ENCODE measurements at regions of chr2 and their contacts with region 1.

Region 1: GRCh38 chr2:38626326-38627035 is 23.8 kb upstream of the HNRNPLL start:
- DNase-seq: peak; percentile 78
- ATAC-seq: peak; percentile 82
- H3K4me3 Mint-ChIP-seq: no peak overlapping the region
- H3K27ac Mint-ChIP-seq: peak overlapping the region; percentile 30
- H3K4me1 Mint-ChIP-seq: peaks cover 27% of the 10 kb centered on the region
- H3K27me3 Mint-ChIP-seq: no peaks in the 10 kb centered on the region

Region 2: GRCh38 chr2:38417745-38418689 is 208.5 kb before region 1 on chr2:
- CTCF ChIA-PET with region 1: no interaction called
- DNase-seq: no peak
- ATAC-seq: no peak
- H3K4me3 Mint-ChIP-seq: no peak overlapping the region
- H3K27ac Mint-ChIP-seq: no peak overlapping the region
- H3K4me1 Mint-ChIP-seq: no peaks in the 10 kb centered on the region
- H3K27me3 Mint-ChIP-seq: peaks cover 12% of the 10 kb centered on the region

Region 3: GRCh38 chr2:38610851-38611801 is 15.4 kb before region 1 on chr2:
- CTCF ChIA-PET with region 1: interaction called, 20 read pairs
- DNase-seq: peak; percentile 70
- ATAC-seq: peak; percentile 77
- H3K4me3 Mint-ChIP-seq: peak overlapping the region; percentile 42
- H3K27ac Mint-ChIP-seq: peak overlapping the region; percentile 85
- H3K4me1 Mint-ChIP-seq: peaks cover 77% of the 10 kb centered on the region
- H3K27me3 Mint-ChIP-seq: no peaks in the 10 kb centered on the region

Measured in activated CD8-positive, alpha-beta memory T cell treated with anti-CD3 and anti-CD28 coated beads, Interleukin-2, amount 10 ng/mL, durations not matched to agents 7 days and 5 days (primary cell).